Activated CD8-positive, alpha-beta T cell treated with anti-CD3 and anti-CD28 coated beads, Interleukin-2, amount 10 ng/mL, durations not matched to agents 7 days and 5 days (primary cell): ENCODE measurements at regions of chr18 and their contacts with region 1.

Region 1: GRCh38 chr18:741931-742512 is 29.6 kb upstream of the ENOSF1 start:
- DNase-seq: no peak
- ATAC-seq: peak; percentile 68
- H3K4me3 Mint-ChIP-seq: no peak overlapping the region
- H3K27ac Mint-ChIP-seq: no peak overlapping the region
- H3K4me1 Mint-ChIP-seq: peaks cover 1% of the 10 kb centered on the region
- H3K27me3 Mint-ChIP-seq: no peaks in the 10 kb centered on the region

Region 2: GRCh38 chr18:434410-434809 is 307.6 kb before region 1 on chr18:
- CTCF ChIA-PET with region 1: no interaction called
- POLR2A ChIA-PET with region 1: no interaction called
- DNase-seq: no peak
- ATAC-seq: no peak
- H3K4me3 Mint-ChIP-seq: no peak overlapping the region
- H3K27ac Mint-ChIP-seq: no peak overlapping the region
- H3K4me1 Mint-ChIP-seq: no peaks in the 10 kb centered on the region
- H3K27me3 Mint-ChIP-seq: peaks cover 4% of the 10 kb centered on the region

Region 3: DNA sequence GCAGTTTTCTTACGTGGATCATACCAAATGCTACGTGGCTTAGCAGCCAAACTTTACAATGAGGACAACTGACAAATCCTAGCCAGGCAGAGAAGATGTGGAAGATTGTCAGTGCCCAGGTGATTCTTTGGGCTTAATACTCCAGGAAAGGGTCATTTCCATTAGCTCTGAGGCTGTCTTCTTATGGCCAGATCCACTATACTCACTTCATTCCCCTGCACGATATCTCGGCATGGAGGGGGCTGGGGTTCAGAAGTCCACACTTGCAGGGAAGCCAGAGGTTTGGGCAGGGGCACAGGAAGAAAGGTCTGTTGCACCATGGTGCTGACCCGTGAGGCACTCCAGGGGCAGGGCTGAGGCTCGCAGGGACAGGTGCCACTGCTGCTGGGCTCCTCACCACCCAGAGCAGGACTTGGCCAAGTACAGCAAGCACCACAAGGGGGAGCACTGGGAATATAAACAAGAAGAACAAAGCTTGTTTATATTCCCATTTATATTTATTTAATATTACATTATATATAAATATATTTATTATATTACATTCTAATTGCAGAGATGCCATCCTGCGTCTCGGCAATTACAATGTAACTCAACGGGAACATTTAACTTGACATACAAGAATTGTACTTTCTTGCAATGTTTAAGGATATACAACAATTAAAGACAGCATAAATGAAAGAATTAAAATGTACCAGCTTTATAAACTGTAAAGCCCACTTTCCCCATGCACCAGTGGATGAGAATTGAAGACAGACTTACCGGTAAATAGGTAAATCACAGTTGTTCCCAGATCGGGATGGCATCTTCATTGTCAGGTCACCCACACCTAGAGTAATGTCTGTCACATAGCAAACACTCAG is 118.0 kb before region 1 on chr18:
- CTCF ChIA-PET with region 1: interaction called, 11 read pairs
- POLR2A ChIA-PET with region 1: interaction called, 3 read pairs
- DNase-seq: peak; percentile 80
- ATAC-seq: peak; percentile 89
- H3K4me3 Mint-ChIP-seq: no peak overlapping the region
- H3K27ac Mint-ChIP-seq: no peak overlapping the region
- H3K4me1 Mint-ChIP-seq: peaks cover 2% of the 10 kb centered on the region
- H3K27me3 Mint-ChIP-seq: peaks cover 31% of the 10 kb centered on the region

Region 4: GRCh38 chr18:712401-713134 is 29.5 kb before region 1 on chr18 and contains the start of gene ENOSF1:
- CTCF ChIA-PET with region 1: interaction called, 12 read pairs
- POLR2A ChIA-PET with region 1: no interaction called
- DNase-seq: peak; percentile 88
- ATAC-seq: peak; percentile 89
- H3K4me3 Mint-ChIP-seq: peak within 1 kb of the TSS; percentile 88
- H3K27ac Mint-ChIP-seq: peak within 1 kb of the TSS; percentile 93
- H3K4me1 Mint-ChIP-seq: peaks cover 51% of the 10 kb centered on the region
- H3K27me3 Mint-ChIP-seq: no peaks in the 10 kb centered on the region
- total RNA-seq, gene ENOSF1: 66.0 to 74.1 TPM

Region 5: GRCh38 chr18:812376-813171 is 70.6 kb after region 1 on chr18:
- CTCF ChIA-PET with region 1: interaction called, 14 read pairs
- POLR2A ChIA-PET with region 1: no interaction called
- DNase-seq: peak; percentile 84
- ATAC-seq: peak; percentile 66
- H3K4me3 Mint-ChIP-seq: peak overlapping the region; percentile 79
- H3K27ac Mint-ChIP-seq: peak overlapping the region; percentile 98
- H3K4me1 Mint-ChIP-seq: peaks cover 68% of the 10 kb centered on the region
- H3K27me3 Mint-ChIP-seq: no peaks in the 10 kb centered on the region

Region 6: DNA sequence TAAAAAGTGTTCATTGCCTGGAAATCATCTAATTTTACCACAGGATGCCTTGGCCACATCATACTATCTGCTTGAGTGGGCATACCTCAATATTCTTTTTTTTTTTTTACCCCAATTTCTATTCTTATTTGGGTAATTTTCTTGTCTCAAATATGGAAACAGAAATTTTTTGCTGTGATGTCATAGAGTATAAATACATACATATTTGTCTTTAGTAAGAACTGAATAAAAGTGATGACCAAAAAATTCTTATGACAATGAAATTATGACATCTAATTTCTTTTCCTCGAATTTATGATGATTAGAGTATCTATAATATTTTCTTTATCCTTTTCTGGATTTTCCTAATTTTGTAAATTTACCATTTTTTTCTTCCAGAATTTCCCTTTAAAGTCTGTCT is 340.5 kb after region 1 on chr18:
- CTCF ChIA-PET with region 1: no interaction called
- POLR2A ChIA-PET with region 1: no interaction called
- DNase-seq: no peak
- ATAC-seq: no peak
- H3K4me3 Mint-ChIP-seq: no peak overlapping the region
- H3K27ac Mint-ChIP-seq: no peak overlapping the region
- H3K4me1 Mint-ChIP-seq: no peaks in the 10 kb centered on the region
- H3K27me3 Mint-ChIP-seq: no peaks in the 10 kb centered on the region